ENCODE measurements at regions of chr1 and their contacts with region 1.

Region 1: DNA sequence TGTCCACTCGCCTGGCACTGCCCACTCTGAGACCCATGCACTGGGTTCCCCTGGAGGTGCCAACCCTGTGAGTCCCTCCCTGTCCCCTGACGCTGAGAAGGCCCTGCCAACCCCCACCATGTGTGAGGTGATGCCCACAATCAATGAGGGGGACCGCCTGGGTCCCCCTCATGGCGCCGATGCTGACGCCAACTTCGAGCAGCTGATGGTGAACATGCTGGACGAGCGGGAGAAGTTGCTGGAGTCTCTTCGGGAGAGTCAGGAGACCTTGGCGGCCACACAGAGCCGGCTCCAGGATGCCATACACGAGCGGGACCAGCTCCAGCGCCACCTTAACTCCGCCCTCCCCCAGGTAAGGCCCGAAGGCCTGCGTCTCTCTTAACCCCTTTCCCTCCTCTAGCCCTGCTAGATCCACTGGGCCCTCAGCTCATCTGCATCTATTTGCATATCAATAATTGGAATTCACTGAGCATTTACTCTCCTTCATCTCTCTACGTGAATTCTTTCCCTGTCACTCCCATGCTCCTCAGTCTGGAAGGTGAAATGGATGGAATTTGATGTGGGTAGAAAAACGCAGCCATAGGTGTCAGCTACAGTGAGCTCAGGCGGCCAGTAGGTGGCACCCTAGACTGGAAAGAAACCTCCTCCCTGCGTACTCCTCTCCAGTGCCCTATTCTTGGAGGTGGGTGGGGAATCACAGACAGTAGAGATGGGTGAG is 12.8 kb downstream of the PPFIA4 start:
- DNase-seq: no peak
- H3K4me3 ChIP-seq: no peak overlapping the region
- CTCF ChIP-seq: peak; percentile 92

Region 2: GRCh38 chr1:202976633-202977032 is 62.4 kb before region 1 on chr1:
- CTCF ChIA-PET with region 1: no interaction called
- POLR2A ChIA-PET with region 1: no interaction called
- DNase-seq: no peak
- H3K4me3 ChIP-seq: no peak overlapping the region
- CTCF ChIP-seq: no peak

Region 3: GRCh38 chr1:202987922-202988583 is 51.0 kb before region 1 on chr1:
- CTCF ChIA-PET with region 1: no interaction called
- POLR2A ChIA-PET with region 1: no interaction called
- DNase-seq: no peak
- H3K4me3 ChIP-seq: no peak overlapping the region
- CTCF ChIP-seq: no peak

Region 4: GRCh38 chr1:203026031-203026989 is 12.7 kb before region 1 on chr1 and contains the start of gene PPFIA4:
- CTCF ChIA-PET with region 1: interaction called, 91 read pairs
- POLR2A ChIA-PET with region 1: interaction called, 4 read pairs
- DNase-seq: no peak
- H3K4me3 ChIP-seq: peak within 1 kb of the TSS; percentile 88
- CTCF ChIP-seq: no peak

Region 5: DNA sequence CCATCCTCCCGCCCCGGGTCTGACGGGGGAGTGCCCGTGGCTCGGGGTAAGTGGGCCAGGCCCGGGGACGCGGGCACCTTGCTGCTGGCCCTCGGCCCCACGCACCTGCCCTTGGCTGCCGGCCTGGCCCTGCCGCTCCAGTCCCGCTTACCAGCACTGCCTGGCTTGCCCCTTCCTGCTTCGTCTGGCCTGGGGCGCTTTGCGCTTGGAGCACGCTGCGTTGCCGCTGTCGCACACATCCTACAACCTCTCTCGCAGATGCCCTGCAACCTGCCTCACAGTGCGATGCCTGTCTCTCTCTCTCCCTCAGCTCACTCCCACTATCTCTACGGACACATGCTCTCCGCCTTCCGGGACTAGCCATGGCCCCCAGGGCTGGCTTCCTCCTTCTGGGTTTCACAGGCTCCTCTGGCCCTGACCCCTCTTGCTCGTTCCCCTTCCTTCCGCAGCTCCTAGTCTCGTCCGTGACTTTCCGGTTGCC is 37.0 kb after region 1 on chr1:
- CTCF ChIA-PET with region 1: interaction called, 12 read pairs
- POLR2A ChIA-PET with region 1: no interaction called
- DNase-seq: no peak
- H3K4me3 ChIP-seq: no peak overlapping the region
- CTCF ChIP-seq: no peak

Region 6: DNA sequence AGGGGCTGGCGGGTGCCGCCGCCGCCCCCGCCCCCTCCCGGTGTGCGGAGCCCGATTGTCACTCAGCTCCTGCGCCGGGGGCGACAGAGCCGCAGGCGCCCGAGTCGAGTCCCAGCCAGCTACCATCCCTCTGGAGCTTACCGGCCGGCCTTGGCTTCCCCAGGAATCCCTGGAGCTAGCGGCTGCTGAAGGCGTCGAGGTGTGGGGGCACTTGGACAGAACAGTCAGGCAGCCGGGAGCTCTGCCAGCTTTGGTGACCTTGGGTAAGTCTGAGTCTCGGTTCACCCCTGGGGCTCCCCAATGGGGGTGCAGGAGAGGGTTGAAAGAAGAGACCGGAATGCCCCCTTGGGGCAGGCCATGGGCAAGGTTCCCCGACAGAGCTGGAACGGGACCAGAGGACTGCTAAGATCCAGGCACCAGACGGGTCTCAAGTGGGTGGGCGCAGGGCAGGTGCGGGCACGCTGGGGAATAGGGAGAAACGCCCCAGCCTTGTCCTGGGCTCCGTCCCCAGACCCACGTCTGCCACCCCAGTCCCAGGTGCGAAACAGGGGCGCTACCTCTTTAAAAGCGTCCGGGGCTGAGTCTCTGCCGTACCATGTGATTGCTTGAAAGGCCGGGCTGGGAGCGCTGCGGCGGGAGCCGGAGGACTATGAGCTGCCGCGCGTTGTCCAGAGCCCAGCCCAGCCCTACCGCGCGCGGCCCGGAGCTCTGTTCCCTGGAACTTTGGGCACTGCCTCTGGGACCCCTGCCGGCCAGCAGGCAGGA is 88.8 kb after region 1 on chr1 and contains the start of gene ADORA1:
- CTCF ChIA-PET with region 1: interaction called, 79 read pairs
- POLR2A ChIA-PET with region 1: no interaction called
- DNase-seq: no peak
- H3K4me3 ChIP-seq: peak within 1 kb of the TSS; percentile 57
- CTCF ChIP-seq: peak; percentile 14

Region 7: DNA sequence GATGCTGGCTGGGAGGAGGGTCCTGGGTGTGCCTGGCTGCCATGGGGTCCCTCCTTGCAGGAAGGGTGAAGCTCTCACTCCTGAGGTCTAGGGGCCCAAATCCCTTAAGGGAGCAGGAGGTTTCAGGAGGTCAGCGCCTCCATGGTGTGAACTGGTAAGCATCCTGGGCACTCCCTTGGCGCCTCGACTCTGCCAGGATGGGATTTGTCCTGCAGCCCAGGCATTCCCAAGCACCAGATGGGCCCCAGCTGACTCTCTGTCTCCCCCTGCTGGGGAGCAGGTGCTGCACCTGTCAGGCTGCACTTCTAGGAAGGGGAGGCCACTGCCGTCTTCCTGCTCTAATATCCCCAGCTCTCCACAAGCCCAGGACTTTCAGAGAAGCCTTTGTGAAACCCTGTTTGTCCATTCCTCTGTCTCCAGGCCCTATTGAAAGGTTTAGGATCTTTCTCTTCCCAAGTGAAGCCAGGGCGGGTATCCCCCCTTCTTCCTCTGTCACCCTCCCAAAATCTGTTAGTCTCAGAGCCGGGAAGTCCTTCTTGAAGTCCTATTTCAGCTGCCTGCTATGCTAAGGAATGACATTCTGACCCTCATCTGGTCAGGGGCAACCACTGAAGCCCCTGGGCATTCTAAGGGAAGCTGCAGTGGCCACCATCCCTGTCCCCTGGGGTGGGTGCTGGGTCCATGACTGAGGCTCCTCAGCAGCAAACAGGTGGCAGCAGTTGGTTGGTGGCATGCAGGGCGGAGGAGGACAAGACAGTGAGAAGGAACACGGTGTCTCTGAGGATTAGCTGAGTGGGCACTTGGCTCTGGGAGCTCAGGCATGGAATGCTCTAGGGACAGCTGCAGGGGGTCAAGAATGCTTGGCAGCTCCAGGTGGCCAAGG is 133.3 kb after region 1 on chr1:
- CTCF ChIA-PET with region 1: interaction called, 209 read pairs
- POLR2A ChIA-PET with region 1: no interaction called
- DNase-seq: no peak
- H3K4me3 ChIP-seq: no peak overlapping the region
- CTCF ChIP-seq: peak; percentile 91

Region 8: DNA sequence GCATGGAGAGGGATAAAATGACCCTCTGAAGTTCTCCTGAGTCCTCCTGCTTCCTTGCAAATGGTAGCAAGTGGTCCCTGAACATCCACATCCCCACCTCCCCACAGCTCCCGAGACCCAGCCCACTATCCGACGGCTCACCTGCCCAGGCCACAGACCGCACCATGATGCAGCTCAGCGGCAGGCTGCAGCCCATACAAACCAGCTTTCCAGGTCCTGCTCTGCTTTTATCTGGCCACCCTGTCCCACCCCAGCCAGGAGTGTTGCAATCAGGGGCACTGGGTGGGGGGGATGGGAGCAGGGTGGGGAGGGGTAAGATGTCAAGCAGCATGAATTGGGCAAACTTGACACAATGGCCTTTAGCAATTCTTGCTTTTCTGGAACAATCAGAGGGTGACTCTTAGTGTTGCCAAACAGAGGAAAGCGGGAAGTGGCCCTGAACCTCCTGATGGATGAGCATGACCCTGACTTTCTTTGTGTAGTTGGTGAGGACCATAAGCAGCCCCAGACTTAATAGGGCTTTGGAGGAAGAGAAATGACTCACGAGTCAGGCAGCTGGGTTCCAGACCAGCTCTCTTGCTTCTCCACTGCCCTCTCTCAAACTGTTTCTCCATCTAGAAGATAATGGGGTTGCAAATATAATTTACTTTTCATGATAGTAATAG is 190.6 kb after region 1 on chr1 and contains the start of gene CHIT1:
- CTCF ChIA-PET with region 1: interaction called, 392 read pairs
- POLR2A ChIA-PET with region 1: no interaction called
- DNase-seq: no peak
- H3K4me3 ChIP-seq: no peak within 1 kb of the TSS
- CTCF ChIP-seq: no peak